IMR-90 (cell line): ENCODE measurements at regions of chr1 and their contacts with region 1.

Region 1: DNA sequence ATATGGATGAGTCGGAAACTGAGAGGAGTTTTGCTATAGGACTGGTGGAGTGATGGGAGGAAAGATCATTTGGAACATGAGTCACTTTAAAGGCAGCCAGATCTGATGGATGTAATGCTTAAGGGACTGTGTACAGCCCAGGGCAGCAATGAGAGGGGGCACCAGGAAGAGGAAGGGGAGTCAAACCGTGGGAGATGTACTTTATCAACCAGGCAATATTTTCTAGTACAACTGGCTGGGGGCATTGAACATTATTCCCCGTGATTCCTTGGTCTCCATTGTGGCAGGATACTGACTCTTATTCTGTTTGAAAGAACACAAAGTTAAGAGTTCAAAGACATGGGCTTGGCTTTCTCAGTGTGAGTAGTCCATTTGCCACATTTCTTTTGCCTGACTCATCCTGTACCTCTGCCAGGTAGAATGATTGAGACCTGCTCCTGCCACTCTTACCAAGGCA is 268.2 kb upstream of the NR5A2 start:
- DNase-seq: peak; percentile 48
- ATAC-seq: peak; percentile 54; the same call in 1 of the 2 replicates
- H3K4me3 ChIP-seq: no peak overlapping the region
- H3K27ac ChIP-seq: no peak overlapping the region
- H3K4me1 ChIP-seq: no peaks in the 10 kb centered on the region
- H3K27me3 ChIP-seq: no peaks in the 10 kb centered on the region
- CTCF ChIP-seq: no peak
- POLR2A ChIP-seq: no peak
- RAD21 ChIP-seq: no peak

Region 2: DNA sequence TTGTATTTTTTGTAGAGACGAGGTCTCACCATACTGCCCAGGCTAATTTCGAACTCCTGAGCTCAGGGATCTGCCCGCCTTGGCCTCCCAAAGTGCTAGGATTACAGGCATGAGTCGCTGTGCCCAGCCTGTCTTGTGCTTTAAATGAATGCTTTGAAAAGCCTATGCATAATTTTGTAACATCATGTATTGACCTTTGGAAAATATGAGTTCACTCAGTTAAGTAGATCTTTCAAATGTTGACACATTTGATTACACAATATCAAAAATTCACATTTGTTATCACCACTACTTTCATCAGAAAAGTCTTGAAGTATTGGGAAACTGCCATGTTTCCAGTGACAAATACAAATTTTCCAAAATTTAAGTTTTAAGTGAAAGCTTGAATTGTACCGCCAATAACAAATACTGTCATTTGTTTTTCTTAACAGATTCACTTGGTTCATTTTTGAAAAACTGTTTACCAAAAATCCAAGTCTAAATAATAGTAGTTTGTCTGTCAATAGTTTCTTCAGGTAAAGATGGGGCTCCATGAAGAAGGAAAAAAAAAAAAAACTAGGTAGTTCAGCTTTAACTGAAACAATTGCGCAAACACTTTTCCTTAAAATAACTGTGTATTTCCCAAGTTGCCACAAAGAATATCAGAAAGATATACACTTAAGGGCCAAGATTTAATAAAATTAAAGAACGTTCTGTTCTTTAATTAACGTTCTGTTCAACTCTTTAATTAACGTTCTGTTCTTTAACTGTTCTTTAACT is 35.0 kb after region 1 on chr1:
- CTCF ChIA-PET with region 1: interaction called, 10 read pairs
- POLR2A ChIA-PET with region 1: no interaction called
- dilution Hi-C with region 1: no loop called
- in situ Hi-C with region 1: no loop called
- intact Hi-C with region 1: no loop called
- DNase-seq: no peak
- ATAC-seq: no peak
- H3K4me3 ChIP-seq: no peak overlapping the region
- H3K27ac ChIP-seq: no peak overlapping the region
- H3K4me1 ChIP-seq: no peaks in the 10 kb centered on the region
- H3K27me3 ChIP-seq: no peaks in the 10 kb centered on the region
- CTCF ChIP-seq: no peak
- POLR2A ChIP-seq: no peak
- RAD21 ChIP-seq: no peak

Region 3: DNA sequence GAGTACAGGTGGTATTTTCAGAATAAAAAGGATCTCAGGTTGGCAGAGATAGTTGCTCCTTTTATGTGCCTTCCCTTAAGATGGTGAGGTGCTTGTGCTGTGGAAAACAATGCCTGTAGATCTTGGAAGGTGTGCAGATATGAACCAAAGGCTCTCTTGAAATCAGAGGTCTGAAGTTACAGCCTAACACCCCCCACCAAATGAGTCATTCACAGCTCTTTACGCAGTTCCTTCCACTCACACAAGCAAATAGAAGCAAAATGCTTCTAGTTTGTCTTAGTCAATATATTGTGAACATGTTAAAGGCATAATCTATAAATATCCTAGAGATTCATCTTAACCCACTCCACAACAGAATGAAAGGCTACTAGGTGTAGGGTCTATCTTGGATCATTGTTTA is 139.4 kb after region 1 on chr1:
- CTCF ChIA-PET with region 1: no interaction called
- POLR2A ChIA-PET with region 1: no interaction called
- dilution Hi-C with region 1: no loop called
- in situ Hi-C with region 1: no loop called
- intact Hi-C with region 1: no loop called
- DNase-seq: peak; percentile 19
- ATAC-seq: no peak
- H3K4me3 ChIP-seq: no peak overlapping the region
- H3K27ac ChIP-seq: no peak overlapping the region
- H3K4me1 ChIP-seq: peaks cover 2% of the 10 kb centered on the region; the same call in 1 of the 2 replicates
- H3K27me3 ChIP-seq: peaks cover 3% of the 10 kb centered on the region; the same call in 1 of the 2 replicates
- CTCF ChIP-seq: no peak
- POLR2A ChIP-seq: no peak
- RAD21 ChIP-seq: no peak